H1 (cell line): ENCODE measurements at regions of chr5 and their contacts with region 1.

Region 1: GRCh38 chr5:112419986-112420864 is 1.1 kb upstream of the EPB41L4A start:
- DNase-seq: peak; percentile 51 to 90
- H3K4me3 ChIP-seq: peak overlapping the region; percentile 60 to 88 (median 80)
- H3K27ac ChIP-seq: no peak overlapping the region
- H3K4me1 ChIP-seq: peaks cover 0 to 10% (median under 1%) of the 10 kb centered on the region in 4 experiments; a peak in 2 of 7 replicates
- H3K27me3 ChIP-seq: peaks cover 5 to 43% (median 23%) of the 10 kb centered on the region in 4 experiments
- CTCF ChIP-seq: peak; percentile 90 to 96 (median 91)
- EP300 ChIP-seq: no peak; a peak in 1 of 3 replicates
- POLR2A ChIP-seq: no peak
- RAD21 ChIP-seq: peak; percentile 87 to 94

Region 2: DNA sequence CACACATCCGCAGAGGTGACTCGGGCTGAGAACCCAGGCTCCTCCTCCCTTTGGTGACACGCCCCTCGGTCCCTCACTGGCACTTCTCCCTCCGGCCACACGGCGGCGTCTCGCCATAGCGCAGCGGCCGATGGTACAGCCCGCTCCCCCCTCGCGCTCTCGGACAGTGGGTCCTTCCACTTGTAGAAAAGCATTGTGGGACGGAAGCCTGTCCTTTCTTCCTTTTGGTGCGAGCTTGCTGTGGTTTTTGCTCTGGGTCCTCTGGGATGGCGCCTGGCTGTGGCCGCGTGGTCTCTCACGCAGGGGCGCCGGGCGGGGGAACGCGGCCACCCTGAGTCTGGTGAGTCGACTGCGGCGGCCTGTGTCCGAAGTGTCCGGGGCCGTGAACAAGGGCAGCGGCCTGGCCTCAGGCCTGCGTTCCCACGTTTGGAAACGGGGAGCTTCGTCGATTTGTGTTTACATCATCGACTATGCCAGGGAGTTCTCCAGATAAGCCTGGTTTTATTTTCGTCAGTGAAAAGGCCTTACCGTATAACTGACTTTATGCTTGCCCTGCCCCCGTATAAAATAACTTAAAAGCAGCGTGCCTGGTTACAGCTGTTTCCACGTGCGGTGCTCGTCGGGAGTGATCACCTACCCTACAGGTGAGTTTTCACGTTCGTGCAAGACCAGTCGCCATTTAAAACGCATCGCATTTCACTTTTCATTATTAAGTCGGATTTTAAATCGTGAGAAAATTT is 259.4 kb before region 1 on chr5:
- CTCF ChIA-PET with region 1: interaction called, 10 read pairs
- POLR2A ChIA-PET with region 1: interaction called, 24 read pairs
- DNase-seq: peak; percentile 70 to 98
- H3K4me3 ChIP-seq: peak overlapping the region; percentile 86 to 99 (median 96)
- H3K27ac ChIP-seq: peak overlapping the region; percentile 91
- H3K4me1 ChIP-seq: peaks cover 3 to 10% (median 3%) of the 10 kb centered on the region in 4 experiments; a peak in 4 of 7 replicates
- H3K27me3 ChIP-seq: no peaks in the 10 kb centered on the region
- CTCF ChIP-seq: peak; percentile 94 to 100 (median 100)
- EP300 ChIP-seq: peak in 1 of 2 experiments; percentile 100; a peak in 2 of 3 replicates
- POLR2A ChIP-seq: peak; percentile 97 to 99
- RAD21 ChIP-seq: peak; percentile 41 to 53

Region 3: DNA sequence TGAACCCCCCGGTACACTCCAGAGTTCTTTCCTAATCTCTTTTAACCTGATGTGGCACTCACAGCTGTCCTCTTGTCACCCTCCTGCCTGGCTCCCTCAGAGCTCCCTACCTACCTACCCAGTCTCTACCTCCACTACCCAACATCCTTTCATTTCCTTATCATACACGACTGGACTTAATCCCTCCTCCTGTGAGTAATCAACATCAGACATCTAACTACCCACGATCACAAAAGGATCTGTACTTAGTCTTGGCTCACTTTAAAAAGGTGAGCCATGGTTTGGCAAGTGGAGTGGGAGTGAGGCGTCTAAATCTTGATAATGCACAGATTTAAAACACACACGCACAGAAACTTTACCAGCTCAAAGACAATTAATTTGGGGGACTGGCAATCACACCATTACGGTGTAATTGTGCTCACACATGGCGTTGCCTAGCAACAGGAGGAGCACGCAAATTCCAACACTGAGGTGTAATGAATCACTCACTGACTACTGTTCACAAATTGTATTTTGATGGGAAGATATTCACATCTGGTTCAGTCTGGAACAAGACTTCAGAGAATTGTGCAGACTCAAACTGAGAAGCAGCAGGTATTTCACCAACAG is 237.0 kb before region 1 on chr5:
- CTCF ChIA-PET with region 1: interaction called, 12 read pairs
- POLR2A ChIA-PET with region 1: no interaction called
- DNase-seq: no peak
- H3K4me3 ChIP-seq: no peak overlapping the region
- H3K27ac ChIP-seq: no peak overlapping the region; the same call in 1 of the 2 replicates
- H3K4me1 ChIP-seq: peaks cover 0 to 6% (median under 1%) of the 10 kb centered on the region in 4 experiments; a peak in 1 of 7 replicates
- H3K27me3 ChIP-seq: no peaks in the 10 kb centered on the region
- CTCF ChIP-seq: no peak
- EP300 ChIP-seq: no peak
- POLR2A ChIP-seq: no peak
- RAD21 ChIP-seq: no peak

Region 4: DNA sequence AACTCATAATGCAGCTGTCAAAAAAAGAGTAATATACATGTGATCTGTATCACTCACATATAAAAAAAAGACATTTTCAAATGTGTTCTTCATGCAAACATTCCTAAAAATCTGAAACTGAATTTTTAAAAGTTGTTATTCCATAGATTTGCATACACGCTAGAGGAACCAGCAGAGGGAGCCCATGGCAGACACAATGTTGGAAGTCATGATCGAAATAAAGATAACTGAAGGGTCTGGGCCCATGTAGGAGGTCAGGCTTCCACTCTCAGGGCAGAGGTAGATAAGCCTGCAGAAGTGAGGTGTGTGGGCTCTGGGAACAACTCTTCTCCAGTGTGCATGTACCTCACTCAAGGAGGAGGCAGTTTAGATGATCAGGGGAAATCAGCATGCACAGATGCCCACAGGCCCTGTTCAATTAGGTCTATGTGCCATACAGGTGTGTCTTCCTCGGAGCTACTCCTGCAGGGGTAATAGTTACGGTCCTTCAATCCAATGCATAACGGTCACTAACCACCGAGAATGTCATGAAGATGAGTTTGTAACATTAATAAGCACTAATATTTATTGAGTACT is 209.7 kb before region 1 on chr5:
- CTCF ChIA-PET with region 1: interaction called, 40 read pairs
- POLR2A ChIA-PET with region 1: no interaction called
- DNase-seq: no peak
- H3K4me3 ChIP-seq: no peak overlapping the region
- H3K27ac ChIP-seq: no peak overlapping the region
- H3K4me1 ChIP-seq: peaks cover 0 to 5% (median 2%) of the 10 kb centered on the region in 4 experiments; a peak in 3 of 7 replicates
- H3K27me3 ChIP-seq: no peaks in the 10 kb centered on the region
- CTCF ChIP-seq: peak in 2 of 3 experiments; percentile 61 to 63; a peak in 3 of 4 replicates
- EP300 ChIP-seq: no peak
- POLR2A ChIP-seq: no peak
- RAD21 ChIP-seq: peak; percentile 80 to 84

Region 5: DNA sequence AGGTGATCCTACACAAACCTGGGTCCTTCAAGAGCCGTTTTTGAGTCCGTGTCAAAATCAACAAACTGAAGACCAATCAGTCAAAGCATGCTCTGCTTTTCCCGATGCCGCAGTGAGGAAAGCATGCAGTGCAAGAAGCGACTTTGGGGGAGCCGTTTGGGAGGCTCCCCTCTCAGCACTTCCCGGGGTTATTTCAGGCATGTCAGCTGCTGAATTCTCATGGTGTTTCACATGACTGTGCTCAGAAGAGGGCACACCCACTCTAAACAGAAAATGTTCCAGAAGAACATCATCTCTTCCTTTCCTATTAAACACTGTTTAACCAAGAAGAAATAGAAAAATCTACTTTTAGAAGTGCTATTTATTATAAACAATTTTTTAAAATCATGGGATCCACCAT is 126.6 kb before region 1 on chr5:
- CTCF ChIA-PET with region 1: interaction called, 15 read pairs
- POLR2A ChIA-PET with region 1: no interaction called
- DNase-seq: no peak
- H3K4me3 ChIP-seq: no peak overlapping the region
- H3K27ac ChIP-seq: no peak overlapping the region
- H3K4me1 ChIP-seq: no peaks in the 10 kb centered on the region
- H3K27me3 ChIP-seq: no peaks in the 10 kb centered on the region
- CTCF ChIP-seq: no peak
- EP300 ChIP-seq: no peak
- POLR2A ChIP-seq: no peak
- RAD21 ChIP-seq: no peak

Region 6: DNA sequence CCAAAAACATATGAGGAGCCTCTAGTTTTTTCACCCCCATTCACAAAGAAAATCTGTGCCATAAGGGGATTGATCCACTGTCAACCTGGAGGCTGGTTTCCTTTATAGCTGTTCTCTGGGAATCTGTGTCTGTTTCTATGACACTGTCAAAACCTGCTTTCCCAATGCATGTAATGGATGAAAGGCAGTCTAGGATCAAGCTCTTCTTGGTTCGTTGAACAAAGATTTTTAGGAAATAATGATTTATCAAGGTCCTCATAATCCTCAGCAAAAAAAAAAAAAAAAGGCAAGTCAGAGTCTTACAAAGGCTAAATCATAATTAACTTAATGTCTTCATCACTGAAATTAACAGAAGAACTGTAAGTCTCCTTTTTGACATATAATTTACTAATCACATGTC is 17.2 kb before region 1 on chr5:
- CTCF ChIA-PET with region 1: interaction called, 16 read pairs
- POLR2A ChIA-PET with region 1: no interaction called
- DNase-seq: no peak
- H3K4me3 ChIP-seq: no peak overlapping the region
- H3K27ac ChIP-seq: no peak overlapping the region
- H3K4me1 ChIP-seq: no peaks in the 10 kb centered on the region
- H3K27me3 ChIP-seq: no peaks in the 10 kb centered on the region
- CTCF ChIP-seq: no peak
- EP300 ChIP-seq: no peak
- POLR2A ChIP-seq: no peak
- RAD21 ChIP-seq: no peak

Region 7: GRCh38 chr5:112529525-112529924 is 109.3 kb after region 1 on chr5:
- CTCF ChIA-PET with region 1: interaction called, 16 read pairs
- POLR2A ChIA-PET with region 1: interaction called, 4 read pairs
- DNase-seq: no peak
- H3K4me3 ChIP-seq: no peak overlapping the region
- H3K27ac ChIP-seq: no peak overlapping the region
- H3K4me1 ChIP-seq: peaks cover 0 to 4% (median 2%) of the 10 kb centered on the region in 4 experiments; a peak in 3 of 7 replicates
- H3K27me3 ChIP-seq: no peaks in the 10 kb centered on the region
- CTCF ChIP-seq: peak in 2 of 3 experiments; percentile 37 to 60; a peak in 2 of 4 replicates
- EP300 ChIP-seq: no peak
- POLR2A ChIP-seq: no peak
- RAD21 ChIP-seq: peak; percentile 44 to 54

Region 8: GRCh38 chr5:112604732-112605630 is 184.8 kb after region 1 on chr5:
- CTCF ChIA-PET with region 1: no interaction called
- POLR2A ChIA-PET with region 1: no interaction called
- DNase-seq: no peak
- H3K4me3 ChIP-seq: no peak overlapping the region
- H3K27ac ChIP-seq: no peak overlapping the region
- H3K4me1 ChIP-seq: no peaks in the 10 kb centered on the region
- H3K27me3 ChIP-seq: no peaks in the 10 kb centered on the region
- CTCF ChIP-seq: peak; percentile 27 to 47 (median 35)
- EP300 ChIP-seq: no peak
- POLR2A ChIP-seq: no peak
- RAD21 ChIP-seq: peak; percentile 57 to 67